ENCODE measurements at regions of chr3 and their contacts with region 1.

Region 1: GRCh38 chr3:157201648-157202278 is 41.8 kb upstream of the CCNL1 start:
- DNase-seq: peak in 2 of 5 donors; percentile 33 to 47
- H3K4me3 ChIP-seq: no peak overlapping the region
- H3K27ac ChIP-seq: no peak overlapping the region
- H3K4me1 ChIP-seq: no peaks in the 10 kb centered on the region
- H3K27me3 ChIP-seq: no peaks in the 10 kb centered on the region
- CTCF ChIP-seq: peak; percentile 48

Region 2: GRCh38 chr3:157493627-157494550 is 292.1 kb after region 1 on chr3:
- intact Hi-C with region 1: loop called (anchors 5 kb)
- DNase-seq: peak in 2 of 5 donors; percentile 78 to 87
- H3K4me3 ChIP-seq: no peak overlapping the region
- H3K27ac ChIP-seq: no peak overlapping the region
- H3K4me1 ChIP-seq: peaks cover 2 to 16% (median 5%) of the 10 kb centered on the region in 3 donors
- H3K27me3 ChIP-seq: no peaks in the 10 kb centered on the region
- CTCF ChIP-seq: peak; percentile 44